ENCODE measurements at regions of chr19 and their contacts with region 1.

Region 1: GRCh38 chr19:54168174-54168917 is 4.6 kb downstream of the TMC4 start:
- DNase-seq: peak; percentile 67
- H3K4me3 ChIP-seq: no peak overlapping the region
- H3K27ac ChIP-seq: no peak overlapping the region
- H3K4me1 ChIP-seq: peaks cover 13% of the 10 kb centered on the region
- H3K27me3 ChIP-seq: no peaks in the 10 kb centered on the region
- CTCF ChIP-seq: peak; percentile 81 to 88

Region 2: GRCh38 chr19:54209811-54210494 is 41.6 kb after region 1 on chr19:
- CTCF ChIA-PET with region 1: no interaction called
- dilution Hi-C with region 1: no loop called
- in situ Hi-C with region 1: no loop called
- intact Hi-C with region 1: loop called (anchors 5 kb)
- DNase-seq: peak; percentile 92
- H3K4me3 ChIP-seq: no peak overlapping the region
- H3K27ac ChIP-seq: peak overlapping the region; percentile 14
- H3K4me1 ChIP-seq: peaks cover 28% of the 10 kb centered on the region
- H3K27me3 ChIP-seq: no peaks in the 10 kb centered on the region
- CTCF ChIP-seq: no peak

Region 3: GRCh38 chr19:54231077-54231931 is 63.0 kb after region 1 on chr19:
- CTCF ChIA-PET with region 1: interaction called, 3 read pairs
- dilution Hi-C with region 1: no loop called
- in situ Hi-C with region 1: no loop called
- intact Hi-C with region 1: loop called (anchors 1 kb)
- DNase-seq: peak; percentile 62
- H3K4me3 ChIP-seq: no peak overlapping the region
- H3K27ac ChIP-seq: no peak overlapping the region
- H3K4me1 ChIP-seq: no peaks in the 10 kb centered on the region
- H3K27me3 ChIP-seq: no peaks in the 10 kb centered on the region
- CTCF ChIP-seq: peak; percentile 85 to 94

Region 4: GRCh38 chr19:54266133-54266532 is 97.8 kb after region 1 on chr19:
- CTCF ChIA-PET with region 1: interaction called, 17 read pairs
- dilution Hi-C with region 1: no loop called
- in situ Hi-C with region 1: no loop called
- intact Hi-C with region 1: no loop called
- DNase-seq: peak; percentile 40
- H3K4me3 ChIP-seq: no peak overlapping the region
- H3K27ac ChIP-seq: no peak overlapping the region
- H3K4me1 ChIP-seq: no peaks in the 10 kb centered on the region
- H3K27me3 ChIP-seq: no peaks in the 10 kb centered on the region
- CTCF ChIP-seq: peak; percentile 68 to 74

Measured in mammary epithelial cell (primary cell).